Mammary epithelial cell (primary cell): ENCODE measurements at regions of chr3 and their contacts with region 1.

Region 1: GRCh38 chr3:53269888-53270880 is 14.4 kb upstream of the TKT start:
- DNase-seq: peak; percentile 100
- H3K4me3 ChIP-seq: peak overlapping the region in 1 of 3 experiments; percentile 28
- H3K27ac ChIP-seq: peak overlapping the region; percentile 85
- H3K4me1 ChIP-seq: peaks cover 28% of the 10 kb centered on the region
- H3K27me3 ChIP-seq: no peaks in the 10 kb centered on the region
- CTCF ChIP-seq: peak in 1 of 2 donors; percentile 28

Region 2: DNA sequence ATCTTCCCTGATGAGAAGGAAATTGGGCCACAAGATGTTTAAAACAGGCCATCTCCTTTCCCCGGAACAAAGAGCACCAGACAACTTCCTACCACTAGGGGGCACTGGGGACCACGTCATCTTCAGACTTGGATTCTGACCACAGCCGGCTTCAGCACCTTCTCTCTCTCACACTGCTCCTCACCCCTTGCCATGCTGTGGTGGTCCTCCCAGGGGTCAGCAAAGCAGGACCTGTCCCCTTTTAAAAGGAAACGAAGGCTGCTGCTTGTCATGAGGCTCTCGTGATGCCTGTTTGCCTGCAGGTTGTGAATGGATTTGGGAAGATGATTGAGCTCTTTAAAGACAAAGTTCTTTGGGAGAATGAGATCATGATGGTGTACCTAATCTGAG is 156.2 kb before region 1 on chr3:
- CTCF ChIA-PET with region 1: no interaction called
- dilution Hi-C with region 1: loop called (anchors 5 kb)
- in situ Hi-C with region 1: no loop called
- intact Hi-C with region 1: no loop called
- DNase-seq: peak; percentile 76
- H3K4me3 ChIP-seq: no peak overlapping the region
- H3K27ac ChIP-seq: peak overlapping the region; percentile 50
- H3K4me1 ChIP-seq: peaks cover 41% of the 10 kb centered on the region
- H3K27me3 ChIP-seq: no peaks in the 10 kb centered on the region
- CTCF ChIP-seq: peak; percentile 85 to 92

Region 3: GRCh38 chr3:53236112-53236841 is 33.9 kb before region 1 on chr3:
- CTCF ChIA-PET with region 1: no interaction called
- dilution Hi-C with region 1: loop called (anchors 5 kb)
- in situ Hi-C with region 1: no loop called
- intact Hi-C with region 1: loop called (anchors 2 kb)
- DNase-seq: peak; percentile 68
- H3K4me3 ChIP-seq: no peak overlapping the region
- H3K27ac ChIP-seq: peak overlapping the region; percentile 8
- H3K4me1 ChIP-seq: peaks cover 36% of the 10 kb centered on the region
- H3K27me3 ChIP-seq: no peaks in the 10 kb centered on the region
- CTCF ChIP-seq: no peak

Region 4: GRCh38 chr3:53243165-53243564 is 27.0 kb before region 1 on chr3:
- CTCF ChIA-PET with region 1: no interaction called
- dilution Hi-C with region 1: loop called (anchors 5 kb)
- in situ Hi-C with region 1: no loop called
- intact Hi-C with region 1: loop called (anchors 2 kb)
- DNase-seq: no peak
- H3K4me3 ChIP-seq: no peak overlapping the region
- H3K27ac ChIP-seq: no peak overlapping the region
- H3K4me1 ChIP-seq: peaks cover 26% of the 10 kb centered on the region
- H3K27me3 ChIP-seq: no peaks in the 10 kb centered on the region
- CTCF ChIP-seq: no peak

Region 5: GRCh38 chr3:53255775-53256703 is 14.1 kb before region 1 on chr3 and contains the start of gene TKT:
- CTCF ChIA-PET with region 1: no interaction called
- dilution Hi-C with region 1: no loop called
- in situ Hi-C with region 1: no loop called
- intact Hi-C with region 1: loop called (anchors 2 kb)
- DNase-seq: peak; percentile 85
- H3K4me3 ChIP-seq: peak within 1 kb of the TSS; percentile 75 to 96 (median 94)
- H3K27ac ChIP-seq: peak within 1 kb of the TSS; percentile 72
- H3K4me1 ChIP-seq: peaks cover 36% of the 10 kb centered on the region
- H3K27me3 ChIP-seq: no peaks in the 10 kb centered on the region
- CTCF ChIP-seq: no peak
- total RNA-seq, gene TKT: 545 to 600 TPM

Region 6: DNA sequence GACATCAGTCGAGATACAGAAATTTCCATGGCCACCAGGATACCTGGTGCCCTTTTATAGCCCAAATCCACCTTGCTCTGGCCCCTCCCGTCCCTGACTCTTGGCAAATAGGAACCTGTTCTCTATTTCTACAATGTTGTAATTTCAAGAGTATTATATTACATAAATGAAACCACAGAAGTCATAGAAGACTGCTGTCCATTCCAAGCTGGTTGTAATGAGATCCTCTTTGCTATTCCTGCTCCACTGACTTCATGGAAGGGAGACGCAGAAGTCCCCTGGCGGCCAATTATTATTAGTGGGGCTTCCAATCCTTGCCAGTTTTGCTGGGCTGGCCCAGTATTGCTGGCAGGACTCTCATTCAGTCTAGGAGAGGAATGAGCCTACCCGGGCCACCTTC is 50.5 kb after region 1 on chr3:
- CTCF ChIA-PET with region 1: no interaction called
- dilution Hi-C with region 1: loop called (anchors 5 kb)
- in situ Hi-C with region 1: no loop called
- intact Hi-C with region 1: no loop called
- DNase-seq: no peak
- H3K4me3 ChIP-seq: no peak overlapping the region
- H3K27ac ChIP-seq: no peak overlapping the region
- H3K4me1 ChIP-seq: no peaks in the 10 kb centered on the region
- H3K27me3 ChIP-seq: no peaks in the 10 kb centered on the region
- CTCF ChIP-seq: no peak